ENCODE measurements at regions of chr17 and their contacts with region 1.

Region 1: DNA sequence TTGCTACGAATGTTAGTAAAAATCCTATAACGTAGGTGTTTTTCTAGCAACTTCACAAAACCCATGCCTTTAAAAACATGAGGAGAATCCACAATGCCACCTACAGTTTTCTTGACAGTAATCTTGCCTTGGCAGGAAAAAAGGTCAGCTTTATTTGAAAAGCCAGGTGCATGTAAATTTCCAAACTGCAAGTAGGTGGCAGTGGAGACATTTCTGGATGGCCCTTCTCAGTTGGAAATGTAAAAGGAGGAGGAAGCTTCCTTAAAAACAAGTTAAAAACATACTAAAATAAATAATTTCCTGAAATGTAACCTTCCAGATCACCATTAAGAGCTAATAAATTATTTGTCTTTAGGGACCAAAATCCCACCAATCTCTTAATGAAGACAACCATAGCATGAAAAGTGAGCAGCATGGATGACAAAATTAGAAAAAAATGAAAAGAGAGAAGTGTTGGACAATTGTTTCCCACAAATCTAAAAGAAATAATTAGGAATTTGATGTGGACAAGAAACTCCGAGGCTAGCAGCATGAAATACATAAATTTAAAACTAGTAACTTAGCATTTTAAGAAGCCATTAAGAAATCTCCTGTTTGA is 152.2 kb downstream of the SNX11 start:
- DNase-seq: no peak
- ATAC-seq: no peak
- H3K4me3 Mint-ChIP-seq: no peak overlapping the region
- H3K27ac Mint-ChIP-seq: no peak overlapping the region
- H3K4me1 Mint-ChIP-seq: peaks cover 5% of the 10 kb centered on the region
- H3K27me3 Mint-ChIP-seq: no peaks in the 10 kb centered on the region

Region 2: DNA sequence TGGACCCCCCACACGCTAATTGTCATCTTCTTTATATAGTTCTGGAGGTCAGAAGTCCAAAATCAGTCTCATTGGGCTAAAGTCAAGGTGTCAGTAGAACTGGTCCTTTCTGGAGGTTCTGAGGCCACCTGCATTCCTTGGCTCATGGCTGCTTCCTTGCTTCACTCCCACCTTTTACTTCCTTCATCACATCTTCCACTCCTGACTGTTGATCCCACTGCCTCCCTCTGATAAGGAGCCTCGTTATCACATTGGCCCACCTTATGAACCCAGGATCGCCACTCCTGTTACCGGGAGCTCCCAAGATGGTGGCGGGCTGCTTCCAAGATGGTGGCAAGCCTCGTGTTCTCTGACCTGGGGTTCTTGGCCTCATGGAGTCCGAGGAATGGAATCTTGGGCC is 1153.7 kb before region 1 on chr17:
- CTCF ChIA-PET with region 1: no interaction called
- POLR2A ChIA-PET with region 1: no interaction called
- intact Hi-C with region 1: no loop called
- DNase-seq: no peak
- ATAC-seq: no peak
- H3K4me3 Mint-ChIP-seq: no peak overlapping the region
- H3K27ac Mint-ChIP-seq: no peak overlapping the region
- H3K4me1 Mint-ChIP-seq: no peaks in the 10 kb centered on the region
- H3K27me3 Mint-ChIP-seq: no peaks in the 10 kb centered on the region

Region 3: GRCh38 chr17:48238933-48239602 is 20.7 kb before region 1 on chr17:
- CTCF ChIA-PET with region 1: interaction called, 10 read pairs
- POLR2A ChIA-PET with region 1: no interaction called
- intact Hi-C with region 1: no loop called
- DNase-seq: no peak
- ATAC-seq: no peak
- H3K4me3 Mint-ChIP-seq: no peak overlapping the region
- H3K27ac Mint-ChIP-seq: no peak overlapping the region
- H3K4me1 Mint-ChIP-seq: peaks cover 63% of the 10 kb centered on the region
- H3K27me3 Mint-ChIP-seq: no peaks in the 10 kb centered on the region

Region 4: DNA sequence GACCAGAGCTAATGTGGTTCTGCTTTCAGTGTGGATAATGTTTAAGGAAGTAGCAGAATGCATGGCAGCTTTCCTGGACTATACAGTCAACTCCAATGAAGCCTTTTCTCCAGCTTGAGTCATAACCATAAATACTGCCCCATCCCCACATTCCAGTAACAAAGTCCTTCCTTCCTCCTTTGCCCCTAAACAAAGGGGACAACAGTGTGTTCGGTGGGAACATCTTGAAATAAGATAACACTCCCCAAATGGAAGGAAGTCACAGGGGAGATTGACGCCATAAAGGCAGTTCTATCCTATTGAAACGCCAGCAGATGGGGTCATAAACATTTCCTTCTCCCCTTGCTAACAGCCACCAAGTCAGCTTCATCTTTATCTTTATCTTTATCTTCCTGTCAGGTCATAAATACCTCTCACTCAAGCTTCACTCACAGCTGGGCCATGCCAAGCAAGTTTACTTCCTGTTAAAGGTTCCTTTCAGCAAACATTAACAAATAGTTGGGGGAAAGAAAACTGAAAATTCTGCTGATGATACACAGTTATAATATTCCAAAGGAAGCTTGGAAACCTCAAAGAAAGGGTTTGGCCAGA is 15.6 kb before region 1 on chr17:
- CTCF ChIA-PET with region 1: interaction called, 13 read pairs
- POLR2A ChIA-PET with region 1: no interaction called
- intact Hi-C with region 1: no loop called
- DNase-seq: no peak
- ATAC-seq: no peak
- H3K4me3 Mint-ChIP-seq: no peak overlapping the region
- H3K27ac Mint-ChIP-seq: no peak overlapping the region
- H3K4me1 Mint-ChIP-seq: peaks cover 62% of the 10 kb centered on the region
- H3K27me3 Mint-ChIP-seq: no peaks in the 10 kb centered on the region

Region 5: GRCh38 chr17:48283411-48283810 is 23.6 kb after region 1 on chr17:
- CTCF ChIA-PET with region 1: interaction called, 16 read pairs
- POLR2A ChIA-PET with region 1: no interaction called
- intact Hi-C with region 1: no loop called
- DNase-seq: no peak
- ATAC-seq: no peak
- H3K4me3 Mint-ChIP-seq: no peak overlapping the region
- H3K27ac Mint-ChIP-seq: no peak overlapping the region
- H3K4me1 Mint-ChIP-seq: peaks cover 12% of the 10 kb centered on the region
- H3K27me3 Mint-ChIP-seq: no peaks in the 10 kb centered on the region

Region 6: GRCh38 chr17:48295362-48296288 is 35.8 kb after region 1 on chr17:
- CTCF ChIA-PET with region 1: interaction called, 3 read pairs
- POLR2A ChIA-PET with region 1: no interaction called
- intact Hi-C with region 1: loop called in 1 of 2 experiments (anchors 2 kb)
- DNase-seq: no peak
- ATAC-seq: peak; percentile 68
- H3K4me3 Mint-ChIP-seq: peak overlapping the region; percentile 73
- H3K27ac Mint-ChIP-seq: peak overlapping the region; percentile 93
- H3K4me1 Mint-ChIP-seq: peaks cover 67% of the 10 kb centered on the region
- H3K27me3 Mint-ChIP-seq: no peaks in the 10 kb centered on the region

Region 7: DNA sequence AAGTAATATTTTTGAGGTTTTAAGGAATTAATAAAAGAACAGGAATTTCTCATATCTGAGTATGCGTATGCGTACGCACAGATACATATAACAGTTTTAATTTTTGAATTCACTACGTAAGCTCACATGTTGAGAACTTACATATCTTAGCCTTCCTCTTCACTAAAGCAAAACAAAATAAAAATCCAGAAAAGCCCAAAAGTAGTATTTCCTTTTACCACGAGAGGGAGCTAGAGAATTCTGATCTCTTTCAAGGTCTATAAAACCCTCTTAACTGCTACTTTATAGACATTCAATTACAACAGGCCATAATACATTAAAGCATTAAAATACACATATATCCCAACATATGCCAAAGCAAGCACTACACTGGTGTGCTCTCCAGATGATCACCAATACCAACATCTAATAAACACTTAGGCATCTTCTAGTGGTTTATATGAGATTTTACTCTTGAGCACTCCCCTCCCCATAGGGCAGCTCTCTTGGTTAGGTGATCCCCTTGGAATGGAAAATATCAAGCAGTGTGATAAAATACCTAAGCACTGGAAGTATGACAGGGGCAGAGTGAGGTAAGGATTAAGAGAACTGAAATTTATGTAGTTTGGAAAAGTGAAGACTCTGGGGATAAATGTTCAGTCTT is 76.2 kb after region 1 on chr17:
- CTCF ChIA-PET with region 1: interaction called, 25 read pairs
- POLR2A ChIA-PET with region 1: no interaction called
- intact Hi-C with region 1: no loop called
- DNase-seq: no peak
- ATAC-seq: peak; percentile 51
- H3K4me3 Mint-ChIP-seq: no peak overlapping the region
- H3K27ac Mint-ChIP-seq: no peak overlapping the region
- H3K4me1 Mint-ChIP-seq: peaks cover 11% of the 10 kb centered on the region
- H3K27me3 Mint-ChIP-seq: no peaks in the 10 kb centered on the region

Measured in activated CD4-positive, alpha-beta T cell treated with anti-CD3 and anti-CD28 coated beads for 36 hours (primary cell).